IMR-90 (cell line): ENCODE measurements at regions of chr17 and their contacts with region 1.

Region 1: GRCh38 chr17:14926526-14927122 is 338.5 kb downstream of the PMP22 start:
- DNase-seq: peak; percentile 74
- ATAC-seq: peak; percentile 49; the same call in 1 of the 2 replicates
- H3K4me3 ChIP-seq: no peak overlapping the region
- H3K27ac ChIP-seq: no peak overlapping the region
- H3K4me1 ChIP-seq: no peaks in the 10 kb centered on the region
- H3K27me3 ChIP-seq: peaks cover 4% of the 10 kb centered on the region
- CTCF ChIP-seq: peak; percentile 89
- POLR2A ChIP-seq: 0 out of 2 replicates have a peak, but pooled peaks have one; percentile 31
- RAD21 ChIP-seq: peak; percentile 99

Region 2: DNA sequence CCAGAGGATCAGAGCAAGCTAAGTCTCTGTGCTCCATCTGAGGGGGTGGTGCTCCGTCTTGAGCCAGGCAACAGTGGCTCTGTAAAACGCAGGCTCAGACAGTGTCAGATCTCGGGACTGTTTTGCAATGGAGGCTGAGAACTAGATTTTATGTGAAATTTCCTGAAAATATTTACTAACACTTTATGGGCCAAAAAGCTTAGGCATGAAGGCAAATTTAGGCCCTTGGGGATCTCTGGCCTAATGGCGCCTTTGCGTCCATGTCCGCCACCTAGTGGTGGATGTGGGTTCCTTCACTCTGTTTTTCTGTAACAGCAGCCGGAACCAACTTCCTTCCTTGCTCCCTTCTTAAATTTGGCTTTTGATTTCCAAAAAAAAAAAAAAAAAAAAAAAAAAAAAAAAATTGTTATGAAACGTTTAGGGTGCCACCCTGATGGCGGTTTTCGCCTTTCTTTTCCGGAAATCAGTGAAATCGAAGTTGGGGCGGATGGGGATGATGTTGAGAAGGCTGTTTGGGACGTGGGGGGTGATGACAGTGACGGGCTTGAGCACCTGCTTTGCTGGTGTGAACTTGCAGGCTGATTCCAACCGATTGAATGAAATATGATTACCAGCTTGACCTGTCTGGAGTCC is 1894.8 kb before region 1 on chr17:
- CTCF ChIA-PET with region 1: no interaction called
- POLR2A ChIA-PET with region 1: no interaction called
- dilution Hi-C with region 1: no loop called
- in situ Hi-C with region 1: no loop called
- intact Hi-C with region 1: loop called (anchors 10 kb)
- DNase-seq: peak; percentile 47
- ATAC-seq: peak; percentile 75
- H3K4me3 ChIP-seq: no peak overlapping the region
- H3K27ac ChIP-seq: no peak overlapping the region
- H3K4me1 ChIP-seq: no peaks in the 10 kb centered on the region
- H3K27me3 ChIP-seq: peaks cover 10% of the 10 kb centered on the region
- CTCF ChIP-seq: peak; percentile 68
- POLR2A ChIP-seq: no peak
- RAD21 ChIP-seq: peak; percentile 20; the same call in 1 of the 2 replicates

Region 3: GRCh38 chr17:14308965-14309879 is 617.4 kb before region 1 on chr17:
- CTCF ChIA-PET with region 1: interaction called, 5 read pairs
- POLR2A ChIA-PET with region 1: no interaction called
- dilution Hi-C with region 1: no loop called
- in situ Hi-C with region 1: loop called (anchors 5 kb)
- intact Hi-C with region 1: no loop called
- DNase-seq: peak; percentile 89
- ATAC-seq: peak; percentile 98
- H3K4me3 ChIP-seq: peak overlapping the region; percentile 40
- H3K27ac ChIP-seq: peak overlapping the region; percentile 51
- H3K4me1 ChIP-seq: peaks cover 12% of the 10 kb centered on the region
- H3K27me3 ChIP-seq: no peaks in the 10 kb centered on the region
- CTCF ChIP-seq: no peak
- POLR2A ChIP-seq: no peak
- RAD21 ChIP-seq: no peak

Region 4: DNA sequence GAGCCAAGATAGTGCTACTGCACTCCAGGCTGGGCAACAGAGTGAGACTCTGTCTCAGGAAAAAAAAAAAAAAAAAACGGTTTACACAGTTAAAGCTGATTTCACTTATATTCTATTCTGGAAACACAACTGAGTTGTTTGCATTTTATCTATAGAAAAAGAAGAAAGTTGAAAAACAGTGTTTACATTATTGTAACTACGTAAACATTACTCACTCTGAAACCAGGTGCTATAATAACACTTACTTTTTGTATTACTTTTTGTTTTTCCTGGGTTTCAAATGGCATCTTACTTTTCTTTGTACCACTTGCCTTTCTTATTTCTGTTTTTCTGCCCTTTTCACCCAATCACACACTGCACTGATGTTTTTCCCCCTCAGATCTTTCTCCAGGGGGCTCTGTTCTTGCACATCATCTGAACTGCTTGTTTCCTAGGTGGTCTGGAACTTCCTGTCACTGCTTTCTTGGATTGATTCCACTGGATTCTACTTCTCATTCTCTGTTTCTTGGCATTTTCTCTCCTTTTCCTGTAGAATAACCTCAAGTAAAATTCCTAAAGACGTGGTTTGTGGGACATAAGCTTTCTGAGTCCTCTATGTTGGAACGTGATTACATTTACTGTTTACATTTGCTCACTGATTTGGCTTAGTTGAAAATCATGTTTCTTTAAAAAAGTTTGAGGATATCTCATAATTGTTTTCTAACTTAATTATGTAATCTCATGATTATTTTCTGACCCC is 483.7 kb before region 1 on chr17:
- CTCF ChIA-PET with region 1: no interaction called
- POLR2A ChIA-PET with region 1: no interaction called
- dilution Hi-C with region 1: no loop called
- in situ Hi-C with region 1: no loop called
- intact Hi-C with region 1: loop called (anchors 10 kb)
- DNase-seq: peak; percentile 58
- ATAC-seq: peak; percentile 76
- H3K4me3 ChIP-seq: no peak overlapping the region
- H3K27ac ChIP-seq: peak overlapping the region; percentile 91; the same call in 1 of the 2 replicates
- H3K4me1 ChIP-seq: peaks cover 2% of the 10 kb centered on the region
- H3K27me3 ChIP-seq: no peaks in the 10 kb centered on the region
- CTCF ChIP-seq: no peak
- POLR2A ChIP-seq: no peak
- RAD21 ChIP-seq: no peak

Region 5: DNA sequence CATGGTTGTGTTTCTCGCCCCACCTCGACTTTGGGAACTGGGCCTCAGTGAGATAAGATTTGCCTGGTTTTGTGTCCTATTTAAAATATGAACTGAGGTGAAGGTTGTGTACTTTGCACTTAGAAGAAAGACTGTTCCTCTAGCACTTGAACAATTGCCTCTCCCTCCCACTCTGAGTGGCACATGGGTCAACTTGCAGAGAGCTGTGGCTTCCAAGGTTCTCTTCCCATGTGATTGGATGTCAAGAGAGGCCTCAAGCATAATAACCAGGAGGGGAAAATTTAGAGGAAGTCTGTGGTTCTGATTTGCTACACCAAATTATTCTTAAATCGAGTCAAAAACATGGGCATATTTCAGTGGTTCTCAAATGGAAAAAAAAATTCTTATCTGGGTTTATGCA is 296.6 kb before region 1 on chr17:
- CTCF ChIA-PET with region 1: no interaction called
- POLR2A ChIA-PET with region 1: no interaction called
- dilution Hi-C with region 1: no loop called
- in situ Hi-C with region 1: no loop called
- intact Hi-C with region 1: no loop called
- DNase-seq: no peak
- ATAC-seq: no peak
- H3K4me3 ChIP-seq: no peak overlapping the region
- H3K27ac ChIP-seq: no peak overlapping the region
- H3K4me1 ChIP-seq: no peaks in the 10 kb centered on the region
- H3K27me3 ChIP-seq: no peaks in the 10 kb centered on the region; the same call in none of the 2 replicates
- CTCF ChIP-seq: no peak
- POLR2A ChIP-seq: no peak
- RAD21 ChIP-seq: no peak

Region 6: DNA sequence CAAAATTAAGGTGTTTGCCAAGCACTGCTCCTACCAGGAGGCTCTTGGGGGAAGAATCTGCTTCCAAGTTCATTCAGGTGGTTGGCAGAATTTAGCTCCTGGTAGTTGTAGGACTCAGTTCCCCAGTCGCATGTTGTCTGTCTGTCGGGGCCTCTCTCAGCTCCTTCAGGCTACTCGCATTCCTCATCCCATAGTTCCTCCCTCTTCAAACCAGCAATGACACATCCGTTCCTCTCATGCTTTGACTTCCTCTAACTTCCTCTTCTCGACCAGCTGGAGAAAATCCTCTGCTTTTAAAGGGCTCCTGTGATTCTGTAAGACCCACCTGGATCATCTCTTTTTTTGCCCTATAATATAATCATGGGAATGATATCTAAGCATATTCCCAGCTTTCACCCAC is 230.4 kb after region 1 on chr17:
- CTCF ChIA-PET with region 1: no interaction called
- POLR2A ChIA-PET with region 1: no interaction called
- dilution Hi-C with region 1: no loop called
- in situ Hi-C with region 1: no loop called
- intact Hi-C with region 1: loop called (anchors 5 kb)
- DNase-seq: peak; percentile 44
- ATAC-seq: peak; percentile 46; the same call in 1 of the 2 replicates
- H3K4me3 ChIP-seq: no peak overlapping the region
- H3K27ac ChIP-seq: no peak overlapping the region
- H3K4me1 ChIP-seq: no peaks in the 10 kb centered on the region
- H3K27me3 ChIP-seq: peaks cover under 1% of the 10 kb centered on the region; the same call in 1 of the 2 replicates
- CTCF ChIP-seq: no peak
- POLR2A ChIP-seq: no peak
- RAD21 ChIP-seq: no peak